Activated CD4-positive, alpha-beta T cell treated with anti-CD3 and anti-CD28 coated beads for 36 hours (primary cell): ENCODE measurements at regions of chr1 and their contacts with region 1.

Region 1: GRCh38 chr1:231528172-231529029 is at the start of gene TSNAX:
- DNase-seq: peak; percentile 94
- ATAC-seq: peak; percentile 93
- H3K4me3 Mint-ChIP-seq: peak within 1 kb of the TSS; percentile 88
- H3K27ac Mint-ChIP-seq: peak within 1 kb of the TSS; percentile 99
- H3K4me1 Mint-ChIP-seq: peaks cover 45% of the 10 kb centered on the region
- H3K27me3 Mint-ChIP-seq: no peaks in the 10 kb centered on the region
- total RNA-seq, gene TSNAX: 36.5 to 46.7 TPM

Region 2: GRCh38 chr1:231187571-231187970 is 340.8 kb before region 1 on chr1:
- CTCF ChIA-PET with region 1: no interaction called
- POLR2A ChIA-PET with region 1: no interaction called
- intact Hi-C with region 1: no loop called
- DNase-seq: no peak
- ATAC-seq: no peak
- H3K4me3 Mint-ChIP-seq: no peak overlapping the region
- H3K27ac Mint-ChIP-seq: no peak overlapping the region
- H3K4me1 Mint-ChIP-seq: no peaks in the 10 kb centered on the region
- H3K27me3 Mint-ChIP-seq: peaks cover 20% of the 10 kb centered on the region

Region 3: DNA sequence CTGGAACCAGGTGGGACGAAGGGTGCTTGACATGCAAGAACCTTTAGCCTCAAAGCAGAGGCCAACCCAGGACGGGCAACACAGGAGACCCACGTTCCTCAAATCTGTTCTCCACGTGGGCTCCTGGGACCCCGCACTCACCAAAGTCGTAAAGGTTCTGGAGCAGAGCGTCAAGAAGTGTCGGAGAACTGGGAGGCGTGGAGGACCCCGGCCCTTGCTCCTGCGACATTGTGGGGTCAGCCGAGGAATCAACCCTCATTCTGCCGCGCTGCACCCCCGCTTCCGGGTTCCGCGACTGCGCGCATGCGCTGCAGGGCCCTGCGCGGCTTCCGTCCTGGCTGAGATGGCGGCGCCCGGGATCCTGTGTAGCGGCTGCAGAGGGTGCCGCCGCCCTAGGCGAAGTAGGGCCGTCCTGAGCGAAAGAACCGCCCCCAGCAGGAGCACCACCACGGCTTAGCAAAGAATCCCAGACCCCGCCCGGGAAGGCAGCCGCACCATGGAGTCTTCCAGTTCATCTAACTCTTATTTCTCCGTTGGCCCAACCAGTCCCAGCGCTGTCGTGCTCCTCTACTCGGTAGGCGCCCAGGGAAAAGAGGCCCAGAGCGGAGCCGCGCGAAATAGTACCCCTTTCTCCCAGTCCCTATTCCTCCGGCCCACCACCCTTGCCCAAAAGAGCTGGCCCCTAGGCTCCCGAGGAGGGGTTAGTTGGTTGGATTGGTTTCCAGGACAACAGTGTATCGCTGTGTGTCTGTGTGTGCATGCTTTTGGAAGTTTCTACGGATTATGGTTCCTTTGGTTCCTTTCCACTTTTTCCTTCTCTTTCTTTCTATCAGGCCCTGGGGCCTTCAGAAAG is 287.3 kb before region 1 on chr1 and contains the start of gene GNPAT:
- CTCF ChIA-PET with region 1: interaction called, 3 read pairs
- POLR2A ChIA-PET with region 1: no interaction called
- intact Hi-C with region 1: loop called in 1 of 2 experiments (anchors 1 kb)
- DNase-seq: peak; percentile 94
- ATAC-seq: peak; percentile 98
- H3K4me3 Mint-ChIP-seq: peak within 1 kb of the TSS; percentile 98
- H3K27ac Mint-ChIP-seq: peak within 1 kb of the TSS; percentile 95
- H3K4me1 Mint-ChIP-seq: peaks cover 58% of the 10 kb centered on the region
- H3K27me3 Mint-ChIP-seq: no peaks in the 10 kb centered on the region
- total RNA-seq, gene GNPAT: 58.0 to 62.0 TPM

Region 4: GRCh38 chr1:231357831-231358354 is 170.5 kb before region 1 on chr1:
- CTCF ChIA-PET with region 1: interaction called, 17 read pairs
- POLR2A ChIA-PET with region 1: no interaction called
- intact Hi-C with region 1: loop called in 1 of 2 experiments (anchors 2 kb)
- DNase-seq: peak; percentile 52
- ATAC-seq: peak; percentile 85
- H3K4me3 Mint-ChIP-seq: no peak overlapping the region
- H3K27ac Mint-ChIP-seq: peak overlapping the region; percentile 59
- H3K4me1 Mint-ChIP-seq: peaks cover 6% of the 10 kb centered on the region
- H3K27me3 Mint-ChIP-seq: no peaks in the 10 kb centered on the region

Region 5: GRCh38 chr1:231460614-231461013 is 67.8 kb before region 1 on chr1:
- CTCF ChIA-PET with region 1: interaction called, 3 read pairs
- POLR2A ChIA-PET with region 1: no interaction called
- intact Hi-C with region 1: loop called in 1 of 2 experiments (anchors 2 kb)
- DNase-seq: peak; percentile 77
- ATAC-seq: peak; percentile 66
- H3K4me3 Mint-ChIP-seq: peak overlapping the region; percentile 36
- H3K27ac Mint-ChIP-seq: no peak overlapping the region
- H3K4me1 Mint-ChIP-seq: peaks cover 24% of the 10 kb centered on the region
- H3K27me3 Mint-ChIP-seq: peaks cover 57% of the 10 kb centered on the region

Region 6: DNA sequence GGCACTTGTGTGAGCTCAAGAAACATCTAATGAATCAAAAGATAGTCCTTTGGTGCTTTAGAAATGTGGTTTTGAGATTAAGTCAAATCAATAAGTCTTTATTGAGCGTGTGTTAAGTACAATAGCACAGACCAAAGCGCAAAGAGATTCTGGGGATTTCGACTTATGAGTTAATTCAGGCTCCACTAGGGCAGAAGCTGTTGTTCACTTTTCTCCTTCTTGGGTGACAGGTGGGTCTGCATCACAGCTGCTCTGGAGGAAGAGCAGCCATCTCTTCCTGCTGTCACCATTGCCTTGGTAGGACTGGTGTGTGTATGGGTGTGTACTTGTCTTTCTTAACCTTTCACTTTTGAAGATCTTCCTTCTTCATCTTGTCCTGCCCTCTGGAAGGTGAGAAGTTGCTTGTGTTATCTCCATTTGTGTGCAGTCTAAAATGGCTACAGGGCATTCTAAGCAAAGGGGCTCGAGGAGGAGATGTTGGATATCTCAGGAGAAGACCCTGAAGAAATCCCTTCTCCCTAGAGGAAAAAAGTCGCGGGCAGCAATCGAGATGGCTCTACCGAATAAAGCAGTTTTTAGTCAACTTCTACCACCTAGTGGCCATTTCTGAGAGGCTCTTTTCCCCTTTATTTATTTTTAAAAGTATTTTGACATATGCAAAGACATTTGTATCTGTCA is 75.3 kb after region 1 on chr1:
- CTCF ChIA-PET with region 1: interaction called, 4 read pairs
- POLR2A ChIA-PET with region 1: no interaction called
- intact Hi-C with region 1: loop called in 1 of 2 experiments (anchors 1 kb)
- DNase-seq: peak; percentile 50
- ATAC-seq: peak; percentile 85
- H3K4me3 Mint-ChIP-seq: peak overlapping the region; percentile 73
- H3K27ac Mint-ChIP-seq: peak overlapping the region; percentile 80
- H3K4me1 Mint-ChIP-seq: peaks cover 5% of the 10 kb centered on the region
- H3K27me3 Mint-ChIP-seq: no peaks in the 10 kb centered on the region